ENCODE measurements at regions of chr1 and their contacts with region 1.

Region 1: GRCh38 chr1:68459796-68460195 is 10.0 kb upstream of the RPE65 start:
- DNase-seq: no peak
- ATAC-seq: no peak

Region 2: DNA sequence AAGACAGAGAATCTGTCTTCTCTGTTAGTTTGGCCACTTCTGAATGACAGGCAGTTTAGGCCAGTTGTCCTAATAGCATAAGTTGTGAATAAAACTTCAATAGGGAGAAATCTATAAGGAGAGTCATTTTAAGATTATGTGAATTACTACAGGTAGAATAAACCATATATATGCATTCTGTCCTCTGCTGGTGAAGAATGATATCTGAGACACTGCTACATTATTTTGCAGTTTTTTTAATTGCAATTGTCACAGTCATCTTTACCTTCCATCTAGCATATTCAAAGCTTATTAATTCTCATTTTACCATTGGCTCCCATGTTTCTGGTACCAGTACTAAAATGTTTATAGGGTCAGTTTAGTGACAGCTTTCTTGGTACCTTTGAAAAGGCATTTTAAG is 556.7 kb after region 1 on chr1:
- intact Hi-C with region 1: no loop called
- DNase-seq: no peak
- ATAC-seq: no peak

Region 3: DNA sequence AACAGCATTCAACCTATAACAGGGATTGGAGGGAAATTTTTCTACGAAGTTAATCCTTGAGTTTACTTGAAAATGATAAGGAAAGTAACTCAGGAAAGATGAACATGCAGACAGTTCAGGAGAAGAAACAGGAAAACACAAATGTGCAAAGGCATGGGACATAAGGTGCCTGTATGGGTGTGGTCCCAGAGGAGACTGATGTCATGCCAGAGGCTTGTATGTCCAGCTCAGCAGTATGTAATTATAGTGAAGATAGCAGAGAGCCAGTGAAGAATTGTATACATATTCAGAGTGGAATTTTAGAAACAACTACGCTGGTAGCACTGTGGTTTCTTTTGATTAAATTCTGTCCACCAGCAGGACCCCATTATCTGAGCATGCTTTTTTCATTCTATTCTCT is 1287.4 kb after region 1 on chr1:
- intact Hi-C with region 1: loop called in 1 of 2 experiments (anchors 10 kb)
- DNase-seq: no peak
- ATAC-seq: no peak

Measured in left cardiac atrium (tissue), 4 donors.